HepG2 (cell line): ENCODE measurements at regions of chr22 and their contacts with region 1.

Region 1: GRCh38 chr22:41966607-41967240 is 2.5 kb upstream of the SEPTIN3 start:
- DNase-seq: peak; percentile 52
- ATAC-seq: peak; percentile 80
- H3K4me3 ChIP-seq: no peak overlapping the region
- H3K27ac ChIP-seq: no peak overlapping the region
- H3K4me1 ChIP-seq: peaks cover 11% of the 10 kb centered on the region; the same call in 1 of the 2 replicates
- H3K27me3 ChIP-seq: peaks cover 2 to 24% of the 10 kb centered on the region in 2 experiments; a peak in 4 of 5 replicates
- CTCF ChIP-seq: peak; percentile 78
- EP300 ChIP-seq: no peak
- POLR2A ChIP-seq: no peak
- RAD21 ChIP-seq: 0 out of 2 replicates have a peak, but pooled peaks have one; percentile 44

Region 2: GRCh38 chr22:42070517-42071422 is 104.0 kb after region 1 on chr22 and contains the start of gene NAGA:
- CTCF ChIA-PET with region 1: no interaction called
- POLR2A ChIA-PET with region 1: no interaction called
- in situ Hi-C with region 1: loop called (anchors 5 kb)
- intact Hi-C with region 1: no loop called
- DNase-seq: peak; percentile 92
- ATAC-seq: peak; percentile 98
- H3K4me3 ChIP-seq: peak within 1 kb of the TSS; percentile 52 to 79 (median 64)
- H3K27ac ChIP-seq: peak within 1 kb of the TSS; percentile 68
- H3K4me1 ChIP-seq: peaks cover 36% of the 10 kb centered on the region
- H3K27me3 ChIP-seq: no peaks in the 10 kb centered on the region; a peak in 1 of 5 replicates
- CTCF ChIP-seq: 0 out of 2 replicates have a peak, but pooled peaks have one; percentile 16
- EP300 ChIP-seq: no peak
- POLR2A ChIP-seq: peak; percentile 67 to 92
- RAD21 ChIP-seq: no peak
- total RNA-seq, gene NAGA: 9.1 and 15.1 TPM in 2 replicates